Left lung (tissue), 14 donors: ENCODE measurements at regions of chrX and their contacts with region 1.

Region 1: DNA sequence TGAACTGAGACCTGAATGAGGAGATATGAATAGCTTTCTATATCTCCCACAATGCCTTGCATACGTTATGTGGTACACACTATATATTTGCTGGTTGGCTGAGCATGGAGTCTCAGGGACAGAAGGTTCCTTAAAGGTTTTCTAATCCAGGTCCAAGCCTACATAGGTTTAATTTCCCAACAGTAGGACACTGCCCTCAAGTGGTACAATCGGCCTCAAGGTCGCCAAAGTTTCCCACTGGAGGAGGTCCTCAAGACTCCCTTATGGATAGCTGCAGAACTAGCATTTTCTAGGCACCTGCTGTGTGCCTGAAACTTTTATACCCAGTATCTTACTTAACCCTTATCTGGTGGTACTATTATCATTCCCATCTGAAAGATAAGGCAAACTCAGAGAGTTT is 21.0 kb upstream of the EFNB1 start:
- DNase-seq: no peak
- ATAC-seq: peak; percentile 91
- H3K4me3 ChIP-seq: no peak overlapping the region
- H3K27ac ChIP-seq: no peak overlapping the region
- H3K4me1 ChIP-seq: no peaks in the 10 kb centered on the region
- H3K27me3 ChIP-seq: peaks cover 0 to 12% of the 10 kb centered on the region in 2 donors
- CTCF ChIP-seq: peak; percentile 22 to 38

Region 2: DNA sequence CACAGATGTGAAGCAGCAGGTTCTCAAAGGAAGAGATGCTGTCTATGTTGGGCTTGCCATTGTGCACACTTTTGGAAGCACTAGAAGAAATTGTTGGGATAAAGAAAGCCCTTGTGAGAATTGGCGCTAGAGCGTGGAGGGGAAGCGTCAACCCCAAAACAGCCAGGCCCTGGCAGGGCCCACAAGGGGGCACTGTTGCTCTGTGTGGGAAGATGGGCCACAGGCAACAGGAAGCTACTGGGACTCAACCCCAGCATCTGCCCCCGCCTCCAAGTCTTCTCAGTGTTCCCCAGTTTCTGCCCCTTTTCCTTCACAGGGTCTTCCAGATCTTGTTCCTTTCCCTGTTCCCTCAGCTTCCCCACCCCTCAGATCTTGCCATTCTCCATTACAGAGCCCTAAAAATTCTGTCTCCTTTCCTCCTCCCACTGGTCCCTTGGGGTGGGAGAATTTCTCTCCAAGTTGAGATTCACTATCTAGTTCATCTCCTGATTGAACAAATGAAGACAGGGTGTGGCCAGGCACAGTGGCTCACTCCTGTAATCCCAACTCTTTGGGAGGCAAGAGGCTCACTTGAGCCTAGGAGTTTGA is 74.8 kb before region 1 on chrX:
- intact Hi-C with region 1: loop called in 1 of 2 experiments (anchors 5 kb)
- DNase-seq: peak; percentile 17 to 84 (median 66)
- ATAC-seq: peak; percentile 98
- H3K4me3 ChIP-seq: no peak overlapping the region
- H3K27ac ChIP-seq: no peak overlapping the region
- H3K4me1 ChIP-seq: no peaks in the 10 kb centered on the region
- H3K27me3 ChIP-seq: no peaks in the 10 kb centered on the region
- CTCF ChIP-seq: peak; percentile 59 to 76

Region 3: GRCh38 chrX:68894513-68895340 is 86.9 kb after region 1 on chrX:
- intact Hi-C with region 1: no loop called
- DNase-seq: peak; percentile 46 to 83 (median 73)
- ATAC-seq: peak; percentile 88
- H3K4me3 ChIP-seq: peak overlapping the region in 1 of 2 donors; percentile 11
- H3K27ac ChIP-seq: peak overlapping the region; percentile 59 to 74
- H3K4me1 ChIP-seq: peaks cover 7 to 16% of the 10 kb centered on the region in 2 donors
- H3K27me3 ChIP-seq: no peaks in the 10 kb centered on the region
- CTCF ChIP-seq: no peak

Region 4: GRCh38 chrX:68929332-68930150 is 121.7 kb after region 1 on chrX:
- intact Hi-C with region 1: no loop called
- DNase-seq: no peak
- ATAC-seq: peak; percentile 43
- H3K4me3 ChIP-seq: no peak overlapping the region
- H3K27ac ChIP-seq: peak overlapping the region in 1 of 2 donors; percentile 13
- H3K4me1 ChIP-seq: no peaks in the 10 kb centered on the region
- H3K27me3 ChIP-seq: no peaks in the 10 kb centered on the region
- CTCF ChIP-seq: no peak